Prostate gland (tissue), 2 donors: ENCODE measurements at regions of chr9 and their contacts with region 1.

Region 1: DNA sequence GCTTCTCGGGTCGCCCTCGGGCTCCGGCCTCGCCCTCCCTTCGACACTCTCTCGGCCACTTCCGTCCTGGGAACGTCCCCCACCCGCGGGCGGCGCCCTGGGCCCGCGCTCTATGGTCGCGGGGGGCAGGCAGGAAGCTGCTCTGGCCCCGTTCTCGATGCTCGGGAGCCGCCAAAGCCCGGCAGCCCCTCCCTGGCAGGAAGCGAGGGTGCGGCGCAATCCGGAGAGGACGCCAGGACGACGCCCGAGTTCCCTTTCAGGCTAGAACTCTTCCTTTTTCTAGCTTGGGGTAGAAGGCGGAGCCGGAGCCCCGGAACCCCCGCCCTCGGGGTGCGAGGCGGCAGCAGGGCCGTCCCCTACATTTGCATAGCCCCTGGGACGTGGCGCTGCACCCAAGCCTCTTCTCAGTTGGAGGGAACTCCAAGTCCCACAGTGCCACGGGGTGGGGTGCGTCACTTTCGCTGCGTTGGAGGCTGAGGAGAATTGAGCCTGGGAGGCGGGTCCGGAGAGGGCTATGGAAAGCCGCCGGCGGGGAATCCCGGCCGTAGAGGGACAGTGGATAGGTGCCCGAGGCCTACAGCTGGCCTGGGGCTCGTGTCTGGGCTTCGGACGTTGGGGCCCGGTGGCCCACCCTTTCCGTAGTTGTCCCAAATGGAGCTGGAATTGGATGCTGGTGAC is at the starts of genes CREB3 and TLN1:
- DNase-seq: peak; percentile 98
- H3K4me3 ChIP-seq: peak within 1 kb of the TSS; percentile 65 to 91
- H3K27ac ChIP-seq: peak within 1 kb of the TSS; percentile 88 to 96
- H3K4me1 ChIP-seq: peaks cover 27% of the 10 kb centered on the region
- H3K27me3 ChIP-seq: no peaks in the 10 kb centered on the region
- CTCF ChIP-seq: peak in 1 of 4 experiments; percentile 26
- POLR2A ChIP-seq: peak; percentile 78
- total RNA-seq, gene CREB3: 60.9 to 120 TPM
- total RNA-seq, gene TLN1: 167 to 315 TPM

Region 2: DNA sequence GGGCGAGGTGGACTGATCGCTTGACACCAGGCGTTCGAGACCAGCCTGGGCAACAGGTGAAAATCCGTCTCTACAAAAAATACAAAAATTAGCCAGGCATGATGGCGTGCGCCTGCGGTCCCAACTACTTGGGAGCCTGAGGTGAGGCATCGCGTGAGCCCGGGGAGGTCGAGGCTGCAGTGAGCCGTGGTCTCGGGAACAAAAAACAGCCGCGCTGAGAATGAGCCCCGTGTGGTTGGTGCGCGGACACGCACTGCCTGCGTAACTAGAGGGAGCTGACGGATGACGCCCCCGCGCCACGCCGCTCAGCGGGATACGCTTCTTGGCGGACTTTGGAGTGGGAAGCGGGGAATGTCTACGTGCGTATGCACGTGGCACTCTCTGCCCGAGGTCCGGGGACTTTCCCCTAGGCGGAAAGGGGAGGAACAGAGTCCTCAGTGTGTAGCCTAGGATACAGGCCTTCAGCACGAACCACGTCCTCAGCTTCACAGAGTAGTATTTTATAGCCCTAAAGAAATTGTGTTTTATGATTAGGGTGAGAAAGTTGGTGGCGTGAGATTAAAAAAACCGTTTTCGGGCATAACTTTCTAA is 74.6 kb before region 1 on chr9 and contains the start of gene RMRP:
- intact Hi-C with region 1: loop called (anchors 5 kb)
- DNase-seq: peak; percentile 95
- H3K4me3 ChIP-seq: peak within 1 kb of the TSS; percentile 84 to 91
- H3K27ac ChIP-seq: peak within 1 kb of the TSS; percentile 85 to 93
- H3K4me1 ChIP-seq: no peaks in the 10 kb centered on the region
- H3K27me3 ChIP-seq: no peaks in the 10 kb centered on the region
- CTCF ChIP-seq: peak in 3 of 4 experiments; percentile 15 to 60 (median 47)
- POLR2A ChIP-seq: peak; percentile 68
- total RNA-seq, gene RMRP: 1,879 to 13,864 TPM